ENCODE measurements at regions of chr1 and their contacts with region 1.

Region 1: GRCh38 chr1:170881268-170882265 is 53.8 kb upstream of the MROH9 start:
- DNase-seq: no peak
- ATAC-seq: peak; percentile 65 to 74
- H3K4me3 ChIP-seq: peak overlapping the region; percentile 13 to 33 (median 25)
- H3K27ac ChIP-seq: peak overlapping the region in 1 of 4 donors; percentile 32
- H3K4me1 ChIP-seq: peaks cover 0 to 3% of the 10 kb centered on the region in 2 donors
- H3K27me3 ChIP-seq: no peaks in the 10 kb centered on the region
- CTCF ChIP-seq: peak; percentile 38 to 61 (median 56)
- POLR2A ChIP-seq: no peak

Region 2: GRCh38 chr1:169928438-169929209 is 952.9 kb before region 1 on chr1:
- in situ Hi-C with region 1: loop called in 1 of 4 experiments (anchors 10 kb)
- intact Hi-C with region 1: loop called (anchors 5 kb)
- DNase-seq: no peak
- ATAC-seq: peak in 1 of 2 donors; percentile 33
- H3K4me3 ChIP-seq: no peak overlapping the region
- H3K27ac ChIP-seq: no peak overlapping the region
- H3K4me1 ChIP-seq: peaks cover 0 to 6% of the 10 kb centered on the region in 2 donors
- H3K27me3 ChIP-seq: no peaks in the 10 kb centered on the region
- CTCF ChIP-seq: peak; percentile 29 to 72 (median 60)
- POLR2A ChIP-seq: no peak

Region 3: DNA sequence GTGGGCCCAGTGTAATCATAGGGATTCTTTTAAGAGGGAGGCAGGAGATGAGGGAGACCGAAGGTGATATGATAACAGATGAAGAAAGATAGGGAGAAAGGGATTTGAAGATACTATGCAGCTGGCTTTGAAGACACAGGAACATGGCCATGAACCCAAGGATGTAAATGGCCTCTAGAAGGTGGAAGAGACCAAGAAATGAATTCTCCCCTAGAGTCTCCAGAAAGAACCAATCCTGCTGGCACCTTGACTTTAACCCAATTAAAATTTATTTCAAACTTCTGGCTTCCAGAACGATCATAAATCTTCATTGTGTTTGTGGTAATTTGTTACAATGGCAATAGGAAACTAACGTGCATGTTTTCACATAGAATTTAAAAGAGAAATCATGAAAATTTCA is 444.6 kb before region 1 on chr1:
- in situ Hi-C with region 1: no loop called
- intact Hi-C with region 1: loop called (anchors 5 kb)
- DNase-seq: no peak
- ATAC-seq: no peak
- H3K4me3 ChIP-seq: no peak overlapping the region
- H3K27ac ChIP-seq: no peak overlapping the region
- H3K4me1 ChIP-seq: no peaks in the 10 kb centered on the region
- H3K27me3 ChIP-seq: no peaks in the 10 kb centered on the region
- CTCF ChIP-seq: no peak
- POLR2A ChIP-seq: no peak

Region 4: GRCh38 chr1:170685166-170685565 is 196.4 kb before region 1 on chr1:
- in situ Hi-C with region 1: no loop called
- intact Hi-C with region 1: loop called (anchors 2 kb)
- DNase-seq: peak in 1 of 2 donors; percentile 40
- ATAC-seq: peak in 1 of 2 donors; percentile 26
- H3K4me3 ChIP-seq: no peak overlapping the region
- H3K27ac ChIP-seq: peak overlapping the region; percentile 73 to 95 (median 86)
- H3K4me1 ChIP-seq: peaks cover 57 to 58% of the 10 kb centered on the region in 2 donors
- H3K27me3 ChIP-seq: no peaks in the 10 kb centered on the region
- CTCF ChIP-seq: no peak
- POLR2A ChIP-seq: no peak

Region 5: DNA sequence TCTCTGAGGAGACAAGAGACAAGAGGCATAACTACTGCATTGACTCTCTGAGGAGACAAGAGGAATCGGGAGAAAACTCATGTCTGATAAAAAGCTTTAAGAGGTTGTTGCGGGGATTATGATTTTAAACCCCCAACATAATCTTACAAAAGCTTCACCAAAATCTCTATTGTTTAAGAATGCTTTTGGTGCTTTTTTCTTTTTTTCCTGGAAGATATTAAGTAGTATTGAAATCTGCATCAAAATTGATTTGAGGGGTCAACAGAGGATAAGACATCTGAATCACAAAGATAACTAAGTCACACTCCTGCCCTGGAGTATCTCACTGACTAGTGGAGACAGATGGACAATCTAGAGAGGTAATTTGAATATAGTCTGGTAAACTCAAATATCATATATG is 61.8 kb before region 1 on chr1:
- in situ Hi-C with region 1: no loop called
- intact Hi-C with region 1: no loop called
- DNase-seq: no peak
- ATAC-seq: no peak
- H3K4me3 ChIP-seq: no peak overlapping the region
- H3K27ac ChIP-seq: no peak overlapping the region
- H3K4me1 ChIP-seq: no peaks in the 10 kb centered on the region
- H3K27me3 ChIP-seq: no peaks in the 10 kb centered on the region
- CTCF ChIP-seq: no peak
- POLR2A ChIP-seq: no peak

Region 6: DNA sequence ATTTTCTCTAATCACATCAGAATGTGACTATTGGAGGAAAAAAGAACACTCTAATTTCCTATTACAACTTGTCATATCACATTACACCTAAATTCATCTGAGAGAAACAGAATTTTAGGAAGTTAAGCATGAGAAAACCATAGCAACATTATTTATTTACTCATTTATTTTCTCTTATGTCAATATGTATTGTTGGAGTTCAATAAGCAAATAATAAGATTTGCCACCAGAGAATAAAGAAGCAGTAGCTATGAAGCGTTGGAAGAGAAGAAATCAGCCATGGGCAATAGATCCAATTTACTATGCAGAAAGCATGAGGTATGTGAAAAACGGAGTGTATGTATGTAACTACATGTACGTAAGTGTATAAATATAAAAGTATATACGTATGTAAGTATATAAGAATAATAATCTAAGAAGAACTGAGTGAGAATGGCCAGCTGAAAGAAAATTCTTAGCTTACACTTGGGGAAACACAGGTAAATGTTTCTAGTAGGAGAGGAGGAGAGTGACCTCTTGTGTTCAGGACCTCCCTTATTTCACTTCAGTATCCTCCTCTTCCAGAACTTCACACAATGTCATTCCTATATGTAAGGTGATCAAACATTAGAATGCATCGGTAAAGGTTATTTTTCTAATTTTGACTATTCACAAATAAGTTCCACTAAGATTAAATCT is 46.2 kb after region 1 on chr1:
- in situ Hi-C with region 1: no loop called
- intact Hi-C with region 1: no loop called
- DNase-seq: no peak
- ATAC-seq: no peak
- H3K4me3 ChIP-seq: no peak overlapping the region
- H3K27ac ChIP-seq: no peak overlapping the region
- H3K4me1 ChIP-seq: no peaks in the 10 kb centered on the region
- H3K27me3 ChIP-seq: no peaks in the 10 kb centered on the region
- CTCF ChIP-seq: no peak
- POLR2A ChIP-seq: no peak